Common myeloid progenitor, CD34-positive (primary cell): ENCODE measurements at regions of chr1 and their contacts with region 1.

Region 1: DNA sequence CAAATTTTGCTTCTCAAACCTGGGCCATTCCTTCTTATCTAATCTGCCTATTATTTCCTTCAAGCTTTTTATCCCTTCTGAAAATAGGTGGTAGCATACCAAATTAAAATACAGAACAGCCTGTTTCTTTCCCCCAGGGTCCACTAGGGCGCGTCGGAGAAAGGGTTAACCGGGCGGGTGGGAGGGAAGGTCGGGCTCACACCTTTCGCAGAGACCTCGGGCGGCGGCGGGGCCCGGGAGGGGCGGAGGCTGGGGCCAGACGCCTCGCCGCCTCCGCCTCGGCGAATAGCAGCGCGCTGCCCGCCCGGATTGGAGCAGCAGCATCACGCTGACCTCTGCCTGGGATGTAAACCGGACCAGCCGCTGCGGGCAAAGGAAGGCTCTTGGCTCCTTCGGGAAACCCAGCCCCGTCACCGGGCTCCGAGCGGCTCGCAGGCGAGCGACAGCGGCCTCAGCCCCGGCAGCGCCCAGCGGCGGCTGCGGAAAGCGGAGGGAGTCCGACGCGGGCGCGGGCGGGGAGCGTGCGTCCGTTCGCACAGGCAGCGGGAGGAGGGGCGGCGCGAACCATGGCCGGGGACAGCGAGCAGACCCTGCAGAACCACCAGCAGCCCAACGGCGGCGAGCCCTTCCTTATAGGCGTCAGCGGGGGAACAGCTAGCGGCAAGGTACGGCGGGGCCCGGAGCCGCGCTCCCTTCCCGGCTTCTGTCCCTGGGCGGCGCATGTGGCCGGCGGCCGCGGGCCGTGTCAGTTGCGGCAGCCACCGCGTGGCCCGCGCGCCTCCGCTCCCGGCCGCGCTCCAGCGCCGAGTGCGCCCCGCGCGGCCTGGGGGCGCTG is at the start of gene UCK2:
- DNase-seq: peak; percentile 85 to 91 (median 85)
- H3K4me3 ChIP-seq: peak within 1 kb of the TSS; percentile 76 to 94 (median 90)
- H3K27ac ChIP-seq: peak within 1 kb of the TSS; percentile 78 to 88
- H3K4me1 ChIP-seq: peaks cover 14 to 22% (median 18%) of the 10 kb centered on the region in 4 experiments
- H3K27me3 ChIP-seq: no peaks in the 10 kb centered on the region

Region 2: DNA sequence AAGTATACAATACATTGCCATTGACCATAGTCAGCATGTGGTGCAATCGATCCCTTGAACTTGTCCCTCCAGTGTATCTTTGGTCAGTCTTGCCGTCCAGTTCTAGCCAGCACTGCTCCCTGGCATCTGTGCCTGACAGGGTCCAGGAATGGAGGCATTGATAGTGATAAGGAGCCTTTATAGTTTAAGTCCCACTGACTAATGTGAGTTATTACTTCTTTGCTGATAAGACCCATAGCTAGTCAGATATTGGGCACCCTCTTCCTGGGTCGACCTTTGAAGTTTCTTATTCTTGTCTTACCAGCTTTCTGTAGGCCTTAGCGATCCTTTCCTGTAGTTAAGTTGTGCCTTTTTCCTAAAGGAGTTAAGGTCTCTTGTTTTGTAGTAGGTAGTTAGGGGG is 12.9 kb after region 1 on chr1:
- CTCF ChIA-PET with region 1: interaction called, 12 read pairs
- POLR2A ChIA-PET with region 1: interaction called, 6 read pairs
- DNase-seq: no peak
- H3K4me3 ChIP-seq: no peak overlapping the region
- H3K27ac ChIP-seq: no peak overlapping the region
- H3K4me1 ChIP-seq: peaks cover 7 to 54% (median 31%) of the 10 kb centered on the region in 4 experiments
- H3K27me3 ChIP-seq: no peaks in the 10 kb centered on the region

Region 3: DNA sequence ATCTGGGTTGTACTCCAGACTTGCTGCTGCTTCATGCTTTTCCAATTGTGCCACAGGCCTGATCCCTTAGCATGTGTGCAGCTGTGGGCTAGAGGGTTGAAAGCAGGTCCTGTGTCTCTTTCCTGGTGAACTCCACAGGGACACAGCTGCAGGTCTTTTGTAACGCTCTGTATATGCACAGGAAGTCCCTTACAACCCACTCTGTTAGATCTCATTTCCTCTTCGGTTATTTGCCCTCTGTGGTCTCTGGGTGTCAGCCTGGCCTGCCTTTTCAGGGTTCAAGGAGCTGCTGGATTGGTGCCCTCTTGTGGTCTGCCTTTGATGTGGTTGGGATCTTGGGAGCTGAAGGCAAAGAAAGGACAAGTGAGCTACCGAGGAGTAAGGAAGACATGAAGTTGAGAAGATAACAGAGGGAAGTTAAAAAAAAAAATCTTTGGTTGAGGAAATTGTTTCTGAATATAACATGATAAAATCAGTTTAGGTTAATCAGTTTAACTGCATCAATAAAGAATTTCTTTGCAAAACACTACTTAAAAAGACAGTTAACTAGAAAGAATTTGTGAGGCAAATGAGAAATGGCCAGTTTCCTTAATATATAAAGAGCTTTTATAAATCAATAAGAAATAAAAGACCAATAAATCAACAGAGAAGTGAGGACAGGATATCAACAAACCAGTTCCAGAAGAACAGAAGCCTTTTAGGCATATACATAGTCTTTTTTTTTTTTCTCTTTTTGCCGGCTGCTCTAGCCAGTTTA is 44.0 kb after region 1 on chr1:
- CTCF ChIA-PET with region 1: interaction called, 21 read pairs
- POLR2A ChIA-PET with region 1: interaction called, 3 read pairs
- DNase-seq: peak; percentile 83 to 88 (median 84)
- H3K4me3 ChIP-seq: peak overlapping the region in 2 of 7 experiments; percentile 18 to 50
- H3K27ac ChIP-seq: no peak overlapping the region
- H3K4me1 ChIP-seq: peaks cover 22 to 56% (median 38%) of the 10 kb centered on the region in 4 experiments
- H3K27me3 ChIP-seq: no peaks in the 10 kb centered on the region